ENCODE measurements at regions of chr7 and their contacts with region 1.

Region 1: DNA sequence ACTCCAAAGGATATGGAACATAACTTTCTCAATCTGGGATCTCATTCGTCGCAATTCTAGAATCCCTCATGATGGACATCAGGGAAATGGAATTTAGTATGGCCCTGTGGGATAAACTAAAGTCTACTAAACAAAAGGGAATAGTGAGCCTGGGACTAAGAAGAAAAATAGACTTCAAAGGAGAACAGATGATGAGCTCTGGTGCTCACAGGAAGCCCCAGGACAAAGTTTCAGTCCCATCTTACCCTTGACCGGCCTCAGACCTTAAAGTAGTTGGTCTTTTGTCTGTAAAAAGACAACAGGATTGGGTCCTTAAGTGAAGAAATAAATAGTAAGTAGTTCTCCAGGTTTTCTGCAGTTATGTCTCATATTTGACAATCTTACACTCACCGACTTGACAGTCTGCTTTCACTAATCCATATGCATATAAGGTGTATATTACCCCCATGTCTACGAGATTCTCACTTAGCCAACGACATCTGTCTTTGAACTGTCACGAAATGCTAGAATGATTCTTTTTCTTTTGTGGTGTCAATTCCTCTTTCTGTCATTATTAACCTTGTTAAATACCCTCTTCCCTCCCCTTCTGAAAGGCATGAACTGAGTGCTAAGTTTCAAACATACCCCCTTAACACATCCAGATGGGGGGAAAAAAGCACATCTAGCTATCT is 10.9 kb upstream of the IKZF1 start:
- DNase-seq: no peak
- ATAC-seq: peak; percentile 76
- H3K4me3 Mint-ChIP-seq: peak overlapping the region; percentile 9
- H3K27ac Mint-ChIP-seq: peak overlapping the region; percentile 85
- H3K4me1 Mint-ChIP-seq: peaks cover 33% of the 10 kb centered on the region
- H3K27me3 Mint-ChIP-seq: no peaks in the 10 kb centered on the region
- CTCF ChIP-seq: no peak

Region 2: GRCh38 chr7:49995681-49996080 is 298.0 kb before region 1 on chr7:
- CTCF ChIA-PET with region 1: no interaction called
- POLR2A ChIA-PET with region 1: no interaction called
- intact Hi-C with region 1: no loop called
- DNase-seq: no peak
- ATAC-seq: no peak
- H3K4me3 Mint-ChIP-seq: no peak overlapping the region
- H3K27ac Mint-ChIP-seq: no peak overlapping the region
- H3K4me1 Mint-ChIP-seq: no peaks in the 10 kb centered on the region
- H3K27me3 Mint-ChIP-seq: peaks cover 3% of the 10 kb centered on the region
- CTCF ChIP-seq: no peak

Region 3: DNA sequence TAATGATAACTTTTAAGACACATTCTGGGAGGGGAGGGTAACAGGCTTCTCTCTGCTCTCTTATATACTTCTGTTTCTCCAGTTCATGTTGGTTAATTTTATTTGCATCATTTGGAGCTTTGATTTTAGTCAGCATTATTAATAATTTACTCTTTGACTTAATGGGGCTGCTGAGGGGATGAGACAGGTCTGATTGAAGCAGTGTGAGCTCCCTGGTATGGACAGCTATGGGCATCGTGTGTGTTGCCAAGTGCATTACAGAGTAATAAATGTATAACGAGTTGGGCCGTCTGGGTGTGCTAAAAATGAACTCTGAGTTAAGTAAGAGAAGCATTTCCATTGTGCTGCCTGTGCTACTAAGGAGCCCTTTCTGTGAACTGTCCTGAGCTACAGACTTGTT is 20.8 kb before region 1 on chr7:
- CTCF ChIA-PET with region 1: interaction called, 4 read pairs
- POLR2A ChIA-PET with region 1: interaction called, 20 read pairs
- intact Hi-C with region 1: loop called (anchors 1 kb)
- DNase-seq: no peak
- ATAC-seq: peak; percentile 43
- H3K4me3 Mint-ChIP-seq: peak overlapping the region; percentile 12
- H3K27ac Mint-ChIP-seq: peak overlapping the region; percentile 82
- H3K4me1 Mint-ChIP-seq: peaks cover 99% of the 10 kb centered on the region
- H3K27me3 Mint-ChIP-seq: no peaks in the 10 kb centered on the region
- CTCF ChIP-seq: no peak

Region 4: DNA sequence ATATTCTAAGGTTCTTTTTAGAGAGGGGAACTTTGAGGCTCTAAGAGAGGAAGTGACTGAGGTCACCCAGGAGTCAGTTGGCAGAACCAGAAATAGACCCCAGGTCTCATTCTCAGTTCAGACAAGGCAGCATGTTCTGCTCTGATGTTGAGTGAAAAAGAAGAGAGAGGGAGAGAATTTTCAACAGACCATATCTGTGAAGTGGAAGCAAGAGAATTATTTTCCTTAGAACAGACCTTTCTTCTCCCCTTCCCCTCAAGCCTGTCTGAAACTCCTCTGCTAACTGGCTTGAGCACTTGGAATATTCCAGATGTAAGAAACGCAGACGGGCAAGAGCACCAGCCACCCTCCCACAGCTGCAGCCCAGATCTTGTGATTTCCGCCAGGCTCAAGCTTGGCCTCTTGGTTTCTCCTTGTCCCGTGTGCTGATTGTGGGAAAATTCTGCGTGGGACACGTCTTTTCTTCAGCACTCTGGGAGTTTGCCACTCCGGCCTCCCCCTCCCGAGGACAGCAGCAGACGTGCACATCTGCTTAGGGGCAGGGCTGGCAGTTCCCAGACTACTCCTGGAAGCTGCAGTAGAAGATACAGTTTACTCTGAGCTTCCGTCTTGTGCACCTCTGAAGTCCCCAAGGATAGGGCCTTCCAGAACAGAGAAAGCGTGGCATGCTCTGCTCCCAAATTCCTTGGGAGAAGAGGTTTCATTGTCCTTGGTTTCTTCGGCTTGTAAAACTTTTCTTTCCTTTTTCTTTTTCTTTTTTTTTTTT is 11.8 kb before region 1 on chr7:
- CTCF ChIA-PET with region 1: no interaction called
- POLR2A ChIA-PET with region 1: interaction called, 9 read pairs
- intact Hi-C with region 1: loop called (anchors 1 kb)
- DNase-seq: no peak
- ATAC-seq: peak; percentile 89
- H3K4me3 Mint-ChIP-seq: peak overlapping the region; percentile 84
- H3K27ac Mint-ChIP-seq: peak overlapping the region; percentile 94
- H3K4me1 Mint-ChIP-seq: peaks cover 83% of the 10 kb centered on the region
- H3K27me3 Mint-ChIP-seq: no peaks in the 10 kb centered on the region
- CTCF ChIP-seq: no peak